ENCODE measurements at regions of chr3 and their contacts with region 1.

Region 1: DNA sequence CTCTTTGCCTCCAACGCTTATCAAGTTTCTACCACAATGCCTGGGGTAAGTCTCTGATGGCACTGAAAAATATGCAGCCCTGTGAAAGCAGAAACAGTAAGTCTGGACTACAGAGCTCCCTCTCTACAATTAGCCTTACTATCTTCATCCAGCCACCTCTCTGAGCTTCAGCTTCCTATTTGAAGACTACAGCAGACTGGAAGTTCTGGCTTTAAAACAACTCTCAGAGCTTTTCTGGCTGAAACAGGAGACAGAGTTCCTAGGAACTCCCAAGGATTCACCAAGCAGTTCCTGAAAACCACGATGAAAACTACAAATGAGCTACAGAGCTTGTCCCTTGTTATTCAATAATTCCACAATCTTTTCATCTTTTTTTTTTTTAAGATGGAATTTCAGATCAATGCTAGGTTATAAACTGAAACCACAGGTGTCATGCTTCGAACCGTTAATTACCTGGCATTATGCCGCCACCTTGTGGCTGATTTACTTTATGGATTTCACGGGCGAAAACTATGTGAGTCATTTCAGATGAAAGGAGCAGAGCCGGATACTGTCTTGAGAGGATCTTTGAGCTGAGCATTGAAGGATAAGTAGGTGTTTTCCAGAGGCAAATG is 3.9 kb downstream of the CRYGS start:
- DNase-seq: peak; percentile 86
- H3K4me3 ChIP-seq: no peak overlapping the region
- H3K27ac ChIP-seq: no peak overlapping the region
- H3K4me1 ChIP-seq: peaks cover 9% of the 10 kb centered on the region
- H3K27me3 ChIP-seq: no peaks in the 10 kb centered on the region
- CTCF ChIP-seq: peak; percentile 86

Region 2: GRCh38 chr3:186259612-186260383 is 280.5 kb before region 1 on chr3:
- CTCF ChIA-PET with region 1: interaction called, 8 read pairs
- POLR2A ChIA-PET with region 1: no interaction called
- intact Hi-C with region 1: loop called (anchors 1 kb)
- DNase-seq: peak; percentile 68
- H3K4me3 ChIP-seq: no peak overlapping the region
- H3K27ac ChIP-seq: no peak overlapping the region
- H3K4me1 ChIP-seq: peaks cover 18% of the 10 kb centered on the region
- H3K27me3 ChIP-seq: no peaks in the 10 kb centered on the region
- CTCF ChIP-seq: peak; percentile 92

Region 3: GRCh38 chr3:186277268-186277909 is 262.9 kb before region 1 on chr3:
- CTCF ChIA-PET with region 1: interaction called, 15 read pairs
- POLR2A ChIA-PET with region 1: no interaction called
- intact Hi-C with region 1: no loop called
- DNase-seq: peak; percentile 83
- H3K4me3 ChIP-seq: no peak overlapping the region
- H3K27ac ChIP-seq: no peak overlapping the region
- H3K4me1 ChIP-seq: no peaks in the 10 kb centered on the region
- H3K27me3 ChIP-seq: no peaks in the 10 kb centered on the region
- CTCF ChIP-seq: peak; percentile 82